HEK293 (cell line): ENCODE measurements at regions of chr15 and their contacts with region 1.

Region 1: GRCh38 chr15:41774062-41774881 is at the start of gene MAPKBP1:
- H3K4me3 ChIP-seq: peak within 1 kb of the TSS; percentile 69
- H3K27ac ChIP-seq: peak within 1 kb of the TSS; percentile 56
- H3K4me1 ChIP-seq: peaks cover 3% of the 10 kb centered on the region; the same call in 1 of the 2 replicates
- CTCF ChIP-seq: peak; percentile 99

Region 2: DNA sequence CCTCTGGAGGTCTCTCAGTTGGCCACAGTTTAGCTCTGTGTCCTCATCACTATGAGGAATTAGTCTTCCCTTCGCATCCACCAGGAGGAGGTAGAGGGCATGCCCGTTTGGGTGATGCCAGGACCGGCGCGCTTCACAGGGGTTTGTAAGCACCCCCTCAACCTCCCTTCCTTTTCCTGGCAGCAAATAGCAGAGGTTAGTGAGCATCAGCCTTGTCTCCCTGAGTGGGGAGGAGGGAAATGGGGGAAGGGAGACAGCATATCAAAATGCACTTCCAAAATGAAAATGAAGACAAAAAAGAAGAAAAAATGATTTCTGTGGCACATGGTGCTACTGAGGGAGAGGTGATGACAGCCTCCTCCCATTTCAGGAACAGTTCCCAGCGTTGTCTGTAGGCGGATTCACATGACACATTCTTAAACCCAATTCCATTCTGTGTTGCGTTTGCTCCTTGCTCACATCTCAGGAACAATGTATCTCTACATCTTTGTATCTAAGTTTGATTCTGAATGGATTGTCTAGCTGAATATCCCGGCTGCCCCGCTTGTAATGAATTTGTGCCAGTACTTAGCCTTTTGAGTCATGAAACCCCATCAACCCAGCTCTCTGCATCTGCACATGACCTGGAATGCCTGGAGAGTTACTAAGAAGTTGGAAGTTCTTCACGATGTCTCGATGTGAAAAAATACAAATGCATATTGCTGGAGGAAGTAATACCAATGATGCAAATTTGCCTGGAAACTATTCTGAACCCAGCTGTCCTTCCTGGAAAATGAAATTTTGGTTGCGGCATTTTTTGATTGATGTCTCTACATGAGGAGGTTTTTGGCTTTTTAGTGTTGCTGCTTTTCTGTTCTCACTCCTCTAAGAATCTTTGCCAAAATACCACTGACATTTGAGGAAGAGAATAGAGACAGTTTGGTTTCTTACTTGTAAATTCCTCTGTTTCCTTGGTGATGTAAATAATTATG is 170.0 kb before region 1 on chr15:
- CTCF ChIA-PET with region 1: interaction called, 10 read pairs
- POLR2A ChIA-PET with region 1: no interaction called
- H3K4me3 ChIP-seq: no peak overlapping the region
- H3K27ac ChIP-seq: no peak overlapping the region
- H3K4me1 ChIP-seq: no peaks in the 10 kb centered on the region
- CTCF ChIP-seq: peak; percentile 73; the same call in 1 of the 2 replicates

Region 3: GRCh38 chr15:41655716-41656115 is 118.6 kb before region 1 on chr15:
- CTCF ChIA-PET with region 1: no interaction called
- POLR2A ChIA-PET with region 1: no interaction called
- H3K4me3 ChIP-seq: no peak overlapping the region
- H3K27ac ChIP-seq: no peak overlapping the region
- H3K4me1 ChIP-seq: no peaks in the 10 kb centered on the region
- CTCF ChIP-seq: no peak

Region 4: GRCh38 chr15:41790756-41791546 is 16.7 kb after region 1 on chr15:
- CTCF ChIA-PET with region 1: interaction called, 24 read pairs
- POLR2A ChIA-PET with region 1: interaction called, 3 read pairs
- H3K4me3 ChIP-seq: no peak overlapping the region
- H3K27ac ChIP-seq: no peak overlapping the region
- H3K4me1 ChIP-seq: no peaks in the 10 kb centered on the region
- CTCF ChIP-seq: no peak

Region 5: DNA sequence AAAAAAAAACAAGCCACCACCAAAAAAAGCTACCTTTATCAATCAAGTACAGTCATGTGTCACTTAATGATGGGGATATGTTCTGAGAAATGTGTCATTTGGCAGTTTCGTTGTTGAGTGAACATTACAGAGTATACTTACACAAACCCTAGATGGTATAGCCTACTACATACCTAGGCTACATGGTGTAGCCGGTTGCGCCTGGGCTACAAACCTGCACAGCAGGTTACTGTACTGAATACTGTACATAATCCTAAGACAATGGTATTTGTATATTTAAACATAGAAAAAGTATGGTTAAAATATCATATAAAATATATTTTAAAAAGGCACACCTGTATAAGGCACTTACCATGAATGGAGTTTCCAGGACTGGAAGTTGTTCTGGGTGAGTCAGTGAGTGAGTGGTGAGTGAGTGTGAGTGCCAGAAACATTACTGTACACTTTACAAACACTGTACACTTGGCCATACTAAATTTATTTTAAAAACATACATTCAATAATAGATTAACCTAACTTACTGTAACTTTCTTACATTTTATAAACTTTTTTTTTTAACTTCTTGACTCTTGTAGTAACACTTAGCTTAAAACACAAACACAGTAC is 27.7 kb after region 1 on chr15:
- CTCF ChIA-PET with region 1: interaction called, 10 read pairs
- POLR2A ChIA-PET with region 1: interaction called, 5 read pairs
- H3K4me3 ChIP-seq: no peak overlapping the region
- H3K27ac ChIP-seq: no peak overlapping the region
- H3K4me1 ChIP-seq: no peaks in the 10 kb centered on the region
- CTCF ChIP-seq: no peak

Region 6: DNA sequence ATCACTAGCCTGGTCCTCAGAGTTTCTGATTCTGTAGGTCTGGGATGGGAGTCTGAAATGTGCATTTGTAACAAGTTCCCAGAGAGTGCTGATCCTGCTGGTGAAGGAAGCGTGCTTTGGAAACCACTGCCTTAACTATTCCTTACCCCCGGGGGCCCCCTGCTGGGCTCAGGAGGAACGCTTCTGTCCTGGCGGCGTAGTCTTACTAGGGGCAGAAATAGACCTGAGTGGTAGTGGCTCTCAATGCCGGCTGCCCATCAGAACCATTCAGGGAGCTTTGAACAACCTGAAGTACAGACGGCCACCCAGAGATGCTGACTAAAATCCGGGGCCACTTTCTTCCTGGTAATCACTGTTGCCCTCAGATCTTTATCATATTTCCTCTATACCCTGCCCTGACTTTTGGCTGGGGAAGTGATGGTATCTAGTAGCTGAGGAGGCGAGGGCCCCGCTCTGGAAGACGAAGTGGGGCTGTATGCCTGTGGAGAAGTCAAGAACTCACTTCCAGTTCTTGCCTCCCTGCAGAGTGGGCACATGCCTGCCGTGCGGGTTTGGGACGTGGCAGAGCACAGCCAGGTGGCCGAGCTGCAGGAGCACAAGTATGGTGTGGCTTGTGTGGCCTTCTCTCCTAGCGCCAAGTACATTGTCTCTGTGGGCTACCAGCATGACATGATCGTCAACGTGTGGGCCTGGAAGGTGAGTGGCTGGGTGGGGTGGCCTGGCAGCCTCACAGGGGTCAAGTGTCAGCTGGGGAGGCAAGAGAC is 37.3 kb after region 1 on chr15:
- CTCF ChIA-PET with region 1: interaction called, 100 read pairs
- POLR2A ChIA-PET with region 1: interaction called, 6 read pairs
- H3K4me3 ChIP-seq: no peak overlapping the region
- H3K27ac ChIP-seq: no peak overlapping the region
- H3K4me1 ChIP-seq: no peaks in the 10 kb centered on the region
- CTCF ChIP-seq: peak; percentile 56; the same call in 1 of the 2 replicates

Region 7: GRCh38 chr15:41904541-41905005 is 130.3 kb after region 1 on chr15:
- CTCF ChIA-PET with region 1: interaction called, 33 read pairs
- POLR2A ChIA-PET with region 1: interaction called, 4 read pairs
- H3K4me3 ChIP-seq: no peak overlapping the region
- H3K27ac ChIP-seq: no peak overlapping the region
- H3K4me1 ChIP-seq: no peaks in the 10 kb centered on the region
- CTCF ChIP-seq: peak; percentile 65

Region 8: GRCh38 chr15:42056934-42057779 is 282.9 kb after region 1 on chr15:
- CTCF ChIA-PET with region 1: no interaction called
- POLR2A ChIA-PET with region 1: no interaction called
- H3K4me3 ChIP-seq: peak overlapping the region; percentile 12
- H3K27ac ChIP-seq: no peak overlapping the region
- H3K4me1 ChIP-seq: no peaks in the 10 kb centered on the region
- CTCF ChIP-seq: peak; percentile 86